GM18951 (cell line): ENCODE measurements at regions of chr13 and their contacts with region 1.

Region 1: GRCh38 chr13:95982144-95982543 is 71.1 kb downstream of the UGGT2 start:
- POLR2A ChIP-seq: no peak

Region 2: DNA sequence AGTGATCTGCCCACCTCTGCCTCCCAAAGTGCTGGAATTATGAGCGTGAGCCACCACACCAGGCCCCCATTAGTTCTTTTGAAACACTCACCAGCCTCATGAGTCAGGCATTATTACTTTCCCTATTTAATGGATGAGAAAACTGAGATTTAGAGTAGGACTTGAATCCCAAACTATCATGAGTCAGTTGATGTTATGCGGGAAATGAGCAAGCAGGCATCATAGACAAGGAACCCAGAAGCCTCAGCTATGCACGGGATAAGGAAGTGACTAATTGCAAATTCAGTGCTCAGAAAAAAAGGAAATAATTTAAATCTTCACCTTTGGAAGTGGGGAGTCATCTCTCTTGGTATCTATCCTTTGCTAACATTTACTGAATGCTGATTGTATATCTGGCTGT is 898.4 kb before region 1 on chr13:
- in situ Hi-C with region 1: no loop called
- POLR2A ChIP-seq: no peak

Region 3: GRCh38 chr13:95644601-95645052 is 337.5 kb before region 1 on chr13 and contains the start of gene DZIP1:
- in situ Hi-C with region 1: loop called (anchors 25 kb)
- POLR2A ChIP-seq: peak; percentile 34

Region 4: GRCh38 chr13:96925916-96926628 is 943.9 kb after region 1 on chr13:
- in situ Hi-C with region 1: no loop called
- POLR2A ChIP-seq: no peak